Gastrocnemius medialis (tissue), 4 donors: ENCODE measurements at regions of chr1 and their contacts with region 1.

Region 1: GRCh38 chr1:77533660-77534305 is 148.7 kb downstream of the ZZZ3 start:
- DNase-seq: no peak
- ATAC-seq: peak; percentile 41 to 49
- H3K4me3 ChIP-seq: no peak overlapping the region
- H3K27ac ChIP-seq: no peak overlapping the region
- H3K4me1 ChIP-seq: peaks cover 0 to 2% of the 10 kb centered on the region in 2 donors
- H3K27me3 ChIP-seq: no peaks in the 10 kb centered on the region
- CTCF ChIP-seq: peak; percentile 42 to 79 (median 58)
- POLR2A ChIP-seq: no peak

Region 2: DNA sequence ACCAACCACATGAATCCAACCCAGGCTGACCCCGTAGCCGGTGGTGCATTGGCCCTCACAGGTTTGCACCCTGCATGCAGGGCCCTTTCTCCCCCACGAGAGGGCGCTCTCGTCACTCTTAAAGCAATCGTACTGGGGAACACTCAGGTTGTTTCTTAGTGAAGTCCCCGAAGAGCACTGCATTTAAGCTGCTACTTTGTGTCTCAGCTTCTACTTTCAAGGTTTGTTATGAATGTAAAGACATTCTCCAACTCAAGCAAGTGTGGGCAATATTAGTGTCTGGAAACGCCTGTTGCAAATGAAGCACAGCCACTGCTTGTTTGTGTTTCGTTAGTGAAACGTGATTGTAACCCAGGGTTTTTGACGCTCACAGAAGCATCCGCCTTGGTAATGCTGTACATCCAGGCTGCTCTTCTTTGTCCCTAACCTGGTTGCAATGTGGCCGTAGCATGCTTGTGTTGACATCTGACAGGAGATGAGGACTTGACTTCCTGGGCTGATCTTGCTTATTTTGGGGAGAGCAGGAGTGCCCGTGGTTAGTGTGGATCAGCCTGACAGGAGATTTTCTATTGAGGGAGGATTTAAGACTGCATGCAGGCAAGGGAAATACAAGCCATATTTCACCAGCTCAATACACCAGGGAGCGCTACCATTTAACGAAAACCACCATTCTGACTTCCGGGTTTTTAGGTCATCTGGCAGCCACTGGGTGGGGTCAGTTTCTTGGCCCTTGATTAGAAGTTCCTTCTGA is 1379.4 kb before region 1 on chr1:
- in situ Hi-C with region 1: no loop called
- intact Hi-C with region 1: loop called (anchors 10 kb)
- DNase-seq: peak; percentile 20 to 45
- ATAC-seq: peak; percentile 90 to 94
- H3K4me3 ChIP-seq: peak overlapping the region; percentile 27 to 59 (median 42)
- H3K27ac ChIP-seq: peak overlapping the region in 3 of 4 donors; percentile 31 to 45 (median 45)
- H3K4me1 ChIP-seq: peaks cover 5 to 11% of the 10 kb centered on the region in 2 donors
- H3K27me3 ChIP-seq: no peaks in the 10 kb centered on the region
- CTCF ChIP-seq: peak; percentile 67 to 88 (median 79)
- POLR2A ChIP-seq: no peak

Region 3: GRCh38 chr1:77143529-77144121 is 390.2 kb before region 1 on chr1:
- in situ Hi-C with region 1: loop called in 1 of 4 experiments (anchors 10 kb)
- intact Hi-C with region 1: loop called (anchors 5 kb)
- DNase-seq: no peak
- ATAC-seq: no peak
- H3K4me3 ChIP-seq: no peak overlapping the region
- H3K27ac ChIP-seq: no peak overlapping the region
- H3K4me1 ChIP-seq: no peaks in the 10 kb centered on the region
- H3K27me3 ChIP-seq: no peaks in the 10 kb centered on the region
- CTCF ChIP-seq: peak in 2 of 5 experiments; percentile 4 to 18
- POLR2A ChIP-seq: no peak

Region 4: DNA sequence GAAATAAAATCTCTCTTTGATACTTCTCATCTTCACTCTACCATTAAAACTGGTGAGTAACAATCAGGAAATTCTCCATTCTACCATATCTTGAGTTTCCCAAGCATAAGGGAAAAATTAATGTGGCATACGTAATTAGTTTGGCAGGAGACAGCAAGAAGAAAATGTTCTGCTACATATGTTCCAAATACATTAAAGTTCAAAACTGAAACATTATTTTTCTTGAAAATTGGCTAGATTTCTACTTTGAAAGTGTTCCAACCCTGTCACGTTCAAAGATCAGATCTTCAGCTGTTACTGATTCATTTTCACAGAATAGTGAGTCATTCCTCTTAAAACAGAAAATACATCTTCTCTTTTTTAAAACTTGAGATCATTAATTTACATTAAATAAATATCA is 363.1 kb before region 1 on chr1:
- in situ Hi-C with region 1: loop called in 2 of 4 experiments (anchors 25 kb)
- intact Hi-C with region 1: no loop called
- DNase-seq: no peak
- ATAC-seq: no peak
- H3K4me3 ChIP-seq: no peak overlapping the region
- H3K27ac ChIP-seq: no peak overlapping the region
- H3K4me1 ChIP-seq: no peaks in the 10 kb centered on the region
- H3K27me3 ChIP-seq: no peaks in the 10 kb centered on the region
- CTCF ChIP-seq: no peak
- POLR2A ChIP-seq: no peak